ENCODE measurements at regions of chr14 and their contacts with region 1.

Region 1: GRCh38 chr14:67934008-67934481 is 114.5 kb downstream of the RAD51B start:
- DNase-seq: peak; percentile 18
- H3K4me3 ChIP-seq: no peak overlapping the region
- H3K27ac ChIP-seq: peak overlapping the region; percentile 56 to 67 (median 61)
- H3K4me1 ChIP-seq: peaks cover 6 to 14% (median 10%) of the 10 kb centered on the region in 4 donors
- H3K27me3 ChIP-seq: no peaks in the 10 kb centered on the region
- CTCF ChIP-seq: peak; percentile 60 to 90 (median 68)
- EP300 ChIP-seq: no peak
- POLR2A ChIP-seq: no peak

Region 2: DNA sequence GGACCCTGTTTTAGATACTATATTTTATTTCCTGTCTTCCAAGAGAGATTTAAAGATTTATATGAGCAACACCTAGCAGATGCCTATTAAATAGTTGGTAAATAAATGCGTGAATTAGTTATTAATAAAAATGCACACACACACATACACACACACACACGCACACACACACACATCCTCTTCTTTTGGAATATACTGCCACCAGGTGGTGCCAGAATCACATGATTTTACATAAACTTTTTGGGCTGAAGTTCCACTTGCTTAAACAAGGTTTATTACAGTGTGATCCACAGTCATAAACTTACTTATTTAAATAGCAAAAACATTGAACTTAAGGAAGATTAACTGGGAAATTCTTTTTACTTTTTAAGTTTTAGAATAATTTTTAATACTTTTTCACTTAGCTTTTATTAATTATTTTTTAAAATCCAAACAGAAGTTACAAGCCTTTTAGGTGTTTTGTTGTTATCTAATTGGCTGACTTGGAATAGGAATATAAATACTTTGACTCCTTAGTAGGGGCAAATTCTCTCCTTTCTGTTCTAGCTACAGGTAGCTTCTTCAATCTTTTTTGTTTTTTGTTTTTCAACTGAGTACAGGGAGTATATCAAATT is 96.9 kb before region 1 on chr14:
- in situ Hi-C with region 1: loop called in 2 of 4 experiments (anchors 10 kb)
- intact Hi-C with region 1: no loop called
- DNase-seq: peak; percentile 62
- H3K4me3 ChIP-seq: no peak overlapping the region
- H3K27ac ChIP-seq: no peak overlapping the region
- H3K4me1 ChIP-seq: peaks cover 0 to 8% (median 2%) of the 10 kb centered on the region in 4 donors
- H3K27me3 ChIP-seq: no peaks in the 10 kb centered on the region
- CTCF ChIP-seq: peak; percentile 51 to 84 (median 59)
- EP300 ChIP-seq: no peak
- POLR2A ChIP-seq: no peak

Region 3: DNA sequence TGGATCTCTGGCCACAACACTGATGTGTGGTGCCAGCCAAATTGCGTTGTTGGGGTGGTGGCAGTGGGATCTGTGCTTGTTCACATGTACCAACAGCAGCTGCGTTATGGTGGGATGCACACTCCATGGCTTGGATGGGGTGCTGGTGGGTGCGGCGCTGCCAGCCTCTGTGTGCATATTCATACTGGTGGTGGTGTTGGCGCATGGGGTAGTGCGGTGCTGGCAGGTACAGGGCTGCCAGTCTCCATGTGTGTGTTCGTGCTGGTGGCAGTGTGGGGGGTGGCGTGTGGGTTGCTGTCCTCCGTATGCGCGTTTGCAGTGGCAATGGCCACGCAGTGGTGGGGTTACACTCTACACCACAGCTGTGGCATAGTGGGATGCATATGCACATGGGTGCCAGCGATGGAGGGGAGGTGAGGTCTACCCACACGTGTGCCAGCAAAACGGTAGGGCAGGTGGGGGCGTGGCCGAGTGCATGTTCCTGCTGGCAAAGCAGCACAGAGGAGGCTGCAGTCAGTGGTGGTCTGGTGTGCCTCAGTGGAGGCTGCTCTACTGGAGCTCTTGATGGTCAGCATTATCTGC is 87.9 kb before region 1 on chr14:
- in situ Hi-C with region 1: loop called in 1 of 4 experiments (anchors 10 kb)
- intact Hi-C with region 1: no loop called
- DNase-seq: no peak
- H3K4me3 ChIP-seq: no peak overlapping the region
- H3K27ac ChIP-seq: no peak overlapping the region
- H3K4me1 ChIP-seq: no peaks in the 10 kb centered on the region
- H3K27me3 ChIP-seq: no peaks in the 10 kb centered on the region
- CTCF ChIP-seq: no peak
- EP300 ChIP-seq: no peak
- POLR2A ChIP-seq: no peak

Region 4: DNA sequence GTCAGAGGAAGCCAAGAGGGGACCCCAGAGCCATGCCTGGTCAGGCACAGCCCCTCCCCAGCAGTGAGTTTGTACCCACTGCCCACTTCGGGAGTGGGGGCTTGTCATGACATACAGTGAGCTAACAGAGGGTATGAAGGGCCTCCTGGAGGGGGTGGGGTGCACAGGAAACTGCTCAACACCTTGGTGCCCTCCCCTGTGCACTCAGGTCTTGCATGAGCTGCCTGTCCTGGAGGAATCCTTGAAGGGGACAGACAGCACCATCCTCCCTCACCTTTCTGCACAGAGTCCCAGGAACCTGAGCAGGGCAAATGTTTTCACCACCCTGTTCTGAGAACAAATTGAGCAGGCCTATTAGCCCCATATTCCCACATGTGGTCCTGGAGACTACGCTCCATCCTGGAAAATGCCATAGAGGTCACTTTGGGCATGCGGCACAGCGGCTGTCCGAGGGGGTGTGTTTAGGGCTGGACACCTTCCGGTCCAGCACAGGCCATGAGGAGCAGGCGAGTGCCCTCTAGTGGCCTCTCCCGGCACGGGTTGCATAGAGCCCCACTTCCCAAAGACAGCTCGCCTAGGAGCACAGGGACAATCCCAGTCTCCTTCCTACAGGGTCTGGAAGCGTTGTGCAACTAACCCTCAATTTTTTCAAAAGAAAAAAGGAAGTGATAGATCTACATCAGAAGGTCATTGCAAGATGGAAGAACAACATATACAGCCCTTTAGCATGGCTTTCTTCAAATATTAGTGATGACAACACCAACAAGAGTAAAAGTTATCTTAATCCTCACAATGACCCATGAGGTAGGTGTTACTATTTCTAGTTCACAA is 890.7 kb after region 1 on chr14:
- in situ Hi-C with region 1: loop called (anchors 10 kb)
- intact Hi-C with region 1: no loop called
- DNase-seq: peak; percentile 87
- H3K4me3 ChIP-seq: no peak overlapping the region
- H3K27ac ChIP-seq: no peak overlapping the region
- H3K4me1 ChIP-seq: peaks cover under 1 to 10% (median 4%) of the 10 kb centered on the region in 4 donors
- H3K27me3 ChIP-seq: no peaks in the 10 kb centered on the region
- CTCF ChIP-seq: peak; percentile 79 to 86 (median 81)
- EP300 ChIP-seq: no peak
- POLR2A ChIP-seq: no peak